Activated CD4-positive, alpha-beta T cell treated with anti-CD3 and anti-CD28 coated beads, Interleukin-2, amount 10 ng/mL, durations not matched to agents 24 days and 14 days (primary cell): ENCODE measurements at regions of chr6 and their contacts with region 1.

Region 1: GRCh38 chr6:5302995-5303622 is 41.8 kb downstream of the FARS2 start:
- DNase-seq: peak; percentile 85
- H3K4me3 Mint-ChIP-seq: peak overlapping the region; percentile 36
- H3K27ac Mint-ChIP-seq: no peak overlapping the region
- H3K4me1 Mint-ChIP-seq: peaks cover 21% of the 10 kb centered on the region
- H3K27me3 Mint-ChIP-seq: no peaks in the 10 kb centered on the region

Region 2: GRCh38 chr6:5279891-5280338 is 23.2 kb before region 1 on chr6:
- intact Hi-C with region 1: loop called (anchors 1 kb)
- DNase-seq: peak; percentile 74
- H3K4me3 Mint-ChIP-seq: peak overlapping the region; percentile 31
- H3K27ac Mint-ChIP-seq: peak overlapping the region; percentile 88
- H3K4me1 Mint-ChIP-seq: peaks cover 38% of the 10 kb centered on the region
- H3K27me3 Mint-ChIP-seq: no peaks in the 10 kb centered on the region

Region 3: DNA sequence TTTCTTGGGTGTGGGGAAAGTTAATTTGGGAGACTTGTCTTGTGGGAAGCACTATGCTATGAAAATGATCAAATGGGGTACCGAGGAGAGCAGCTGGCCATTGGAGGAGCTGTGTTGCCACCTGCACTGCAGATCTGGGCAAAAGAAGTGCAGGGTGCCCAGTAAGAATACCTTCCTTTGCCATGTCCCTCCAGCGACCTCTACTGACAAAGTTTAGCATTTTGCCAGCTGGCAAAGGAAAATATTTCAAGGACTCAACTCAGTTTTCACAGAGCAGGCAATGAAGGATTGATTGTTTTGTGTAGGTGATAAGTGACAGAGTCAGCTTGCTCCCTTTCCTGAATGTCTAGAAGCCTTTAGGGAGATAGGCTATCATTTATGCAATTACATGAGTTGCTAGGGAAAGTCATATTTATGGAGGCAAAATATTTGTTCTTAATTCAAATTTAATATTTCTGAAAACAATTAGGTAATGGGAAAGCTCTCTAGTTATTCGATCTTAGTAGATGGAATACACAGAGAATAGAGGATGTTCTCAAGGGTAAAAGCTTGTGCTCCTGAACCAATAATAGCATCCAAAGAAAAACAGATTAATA is 76.6 kb after region 1 on chr6:
- intact Hi-C with region 1: no loop called
- DNase-seq: peak; percentile 79
- H3K4me3 Mint-ChIP-seq: no peak overlapping the region
- H3K27ac Mint-ChIP-seq: no peak overlapping the region
- H3K4me1 Mint-ChIP-seq: no peaks in the 10 kb centered on the region
- H3K27me3 Mint-ChIP-seq: no peaks in the 10 kb centered on the region